A549 (cell line): ENCODE measurements at regions of chr1 and their contacts with region 1.

Region 1: DNA sequence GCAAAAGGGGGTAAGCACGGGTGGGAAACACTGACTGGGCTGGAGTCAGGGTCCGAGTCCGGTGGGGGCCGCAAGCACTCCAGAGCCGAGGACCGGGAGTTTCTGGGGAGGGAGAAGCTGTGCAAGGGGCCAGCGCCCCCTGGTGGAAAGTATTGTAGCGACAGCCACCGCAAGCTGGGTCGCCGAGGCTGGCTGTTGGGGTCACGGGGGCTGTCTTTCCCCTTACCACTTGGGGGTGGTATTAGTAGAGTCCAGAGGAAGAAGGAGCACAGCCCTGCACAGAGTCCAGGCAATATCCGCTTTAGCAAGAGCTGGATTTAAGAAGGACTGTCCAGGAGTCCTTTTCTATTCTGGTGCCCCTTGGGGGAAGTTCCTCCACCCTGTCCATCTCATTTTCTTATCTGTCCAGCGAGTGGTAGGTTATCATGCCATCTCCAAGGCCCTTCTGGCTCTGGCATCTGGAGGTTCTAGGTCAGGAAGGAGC is 17.9 kb upstream of the ETV3 start:
- DNase-seq: peak; percentile 62 to 66
- ATAC-seq: peak; percentile 69 to 89
- H3K4me3 ChIP-seq: peak overlapping the region; percentile 37
- H3K27ac ChIP-seq: peak overlapping the region; percentile 59 to 82; a peak in 4 of 6 replicates
- H3K4me1 ChIP-seq: peaks cover 23% of the 10 kb centered on the region
- CTCF ChIP-seq: peak; percentile 97
- EP300 ChIP-seq: no peak
- POLR2A ChIP-seq: no peak
- RAD21 ChIP-seq: peak; percentile 90 to 92

Region 2: GRCh38 chr1:157081707-157082106 is 74.4 kb before region 1 on chr1:
- CTCF ChIA-PET with region 1: interaction called, 437 read pairs
- POLR2A ChIA-PET with region 1: no interaction called
- DNase-seq: no peak
- ATAC-seq: no peak
- H3K4me3 ChIP-seq: no peak overlapping the region
- H3K27ac ChIP-seq: no peak overlapping the region
- H3K4me1 ChIP-seq: no peaks in the 10 kb centered on the region
- CTCF ChIP-seq: no peak
- EP300 ChIP-seq: no peak
- POLR2A ChIP-seq: no peak
- RAD21 ChIP-seq: no peak

Region 3: DNA sequence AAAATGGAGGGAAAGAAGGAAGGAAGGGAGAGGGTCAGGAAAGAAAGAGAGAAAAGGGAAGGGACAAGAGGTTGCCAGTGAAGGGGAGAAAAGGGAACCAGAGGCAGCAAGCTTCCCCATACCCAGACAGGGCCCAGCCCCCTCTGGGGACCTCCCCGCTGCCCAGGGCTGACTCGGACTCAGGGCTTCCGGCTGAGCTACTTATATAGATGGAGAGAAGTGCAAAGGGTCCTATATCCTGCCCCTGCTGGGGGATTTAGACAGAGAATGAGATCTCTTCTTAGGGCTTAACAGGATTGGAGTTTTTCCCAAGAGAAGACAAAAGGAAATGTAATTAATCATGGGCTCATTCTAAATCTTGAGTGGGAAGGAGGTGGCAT is 56.5 kb before region 1 on chr1 and contains the start of gene ETV3L:
- CTCF ChIA-PET with region 1: interaction called, 40 read pairs
- POLR2A ChIA-PET with region 1: no interaction called
- DNase-seq: no peak
- ATAC-seq: no peak
- H3K4me3 ChIP-seq: no peak within 1 kb of the TSS
- H3K27ac ChIP-seq: no peak within 1 kb of the TSS
- H3K4me1 ChIP-seq: peaks cover 3% of the 10 kb centered on the region; the same call in 1 of the 3 replicates
- CTCF ChIP-seq: no peak
- EP300 ChIP-seq: no peak
- POLR2A ChIP-seq: no peak
- RAD21 ChIP-seq: no peak
- polyA plus RNA-seq, gene ETV3L: not detected in 2 replicates

Region 4: DNA sequence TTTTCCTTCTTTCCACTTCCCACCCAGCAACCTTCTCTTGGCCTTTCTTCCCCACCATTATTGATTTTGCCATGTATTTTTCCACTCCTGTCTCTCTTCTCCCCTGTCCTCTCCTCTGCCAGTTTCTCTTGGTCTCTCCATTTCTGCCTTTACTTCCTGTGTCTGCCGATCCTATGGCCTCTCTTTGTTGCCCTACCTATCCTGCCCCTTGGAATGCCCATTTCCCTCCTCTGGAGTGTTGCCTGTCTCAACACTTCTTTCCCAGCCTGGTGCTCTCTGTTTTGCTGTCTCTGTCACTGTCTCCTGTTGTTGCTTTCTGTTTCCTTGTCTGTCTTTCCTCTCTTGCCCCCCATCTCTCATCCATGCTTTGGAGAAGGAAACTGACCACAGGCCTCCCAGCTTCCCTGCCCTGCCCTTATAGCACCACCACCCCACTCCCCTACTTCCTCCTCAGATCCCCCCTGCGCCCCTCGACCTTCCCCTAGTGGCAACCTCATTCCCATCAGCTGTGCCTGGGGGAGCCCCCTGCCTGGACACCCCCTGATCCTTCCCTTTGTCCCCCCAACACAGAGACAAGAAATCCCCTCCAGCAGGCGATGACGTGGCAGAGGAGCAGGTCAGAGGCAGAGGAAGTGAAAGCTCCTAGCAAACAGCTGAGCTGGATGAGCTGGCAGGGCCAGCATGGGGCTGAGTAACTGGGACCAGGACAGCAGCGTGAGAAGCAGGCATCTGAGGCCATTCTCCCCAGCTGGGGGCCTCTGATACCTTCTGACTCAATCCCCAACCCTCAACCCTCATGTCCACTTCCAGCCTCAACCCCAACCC is 49.9 kb before region 1 on chr1:
- CTCF ChIA-PET with region 1: interaction called, 22 read pairs
- POLR2A ChIA-PET with region 1: no interaction called
- DNase-seq: peak; percentile 40 to 67
- ATAC-seq: peak; percentile 71 to 79
- H3K4me3 ChIP-seq: no peak overlapping the region
- H3K27ac ChIP-seq: peak overlapping the region; percentile 24 to 73; a peak in 4 of 6 replicates
- H3K4me1 ChIP-seq: peaks cover 19% of the 10 kb centered on the region
- CTCF ChIP-seq: no peak
- EP300 ChIP-seq: no peak
- POLR2A ChIP-seq: no peak
- RAD21 ChIP-seq: no peak

Region 5: GRCh38 chr1:157117527-157118057 is 38.5 kb before region 1 on chr1:
- CTCF ChIA-PET with region 1: interaction called, 11 read pairs
- POLR2A ChIA-PET with region 1: no interaction called
- DNase-seq: no peak
- ATAC-seq: no peak
- H3K4me3 ChIP-seq: no peak overlapping the region
- H3K27ac ChIP-seq: no peak overlapping the region
- H3K4me1 ChIP-seq: no peaks in the 10 kb centered on the region
- CTCF ChIP-seq: no peak
- EP300 ChIP-seq: no peak
- POLR2A ChIP-seq: no peak
- RAD21 ChIP-seq: no peak

Region 6: GRCh38 chr1:157138220-157139051 is 17.7 kb before region 1 on chr1 and contains the start of gene ETV3:
- CTCF ChIA-PET with region 1: interaction called, 51 read pairs
- POLR2A ChIA-PET with region 1: interaction called, 7 read pairs
- DNase-seq: peak; percentile 90 to 92
- ATAC-seq: peak; percentile 96 to 98
- H3K4me3 ChIP-seq: peak within 1 kb of the TSS; percentile 96
- H3K27ac ChIP-seq: peak within 1 kb of the TSS; percentile 91 to 98
- H3K4me1 ChIP-seq: peaks cover 14% of the 10 kb centered on the region
- CTCF ChIP-seq: no peak
- EP300 ChIP-seq: no peak
- POLR2A ChIP-seq: peak; percentile 68
- RAD21 ChIP-seq: no peak
- polyA plus RNA-seq, gene ETV3: 12.3 and 14.5 TPM in 2 replicates

Region 7: GRCh38 chr1:157176591-157177121 is 20.6 kb after region 1 on chr1:
- CTCF ChIA-PET with region 1: interaction called, 10 read pairs
- POLR2A ChIA-PET with region 1: no interaction called
- DNase-seq: no peak
- ATAC-seq: no peak
- H3K4me3 ChIP-seq: no peak overlapping the region
- H3K27ac ChIP-seq: no peak overlapping the region
- H3K4me1 ChIP-seq: no peaks in the 10 kb centered on the region
- CTCF ChIP-seq: no peak
- EP300 ChIP-seq: no peak
- POLR2A ChIP-seq: no peak
- RAD21 ChIP-seq: no peak

Region 8: DNA sequence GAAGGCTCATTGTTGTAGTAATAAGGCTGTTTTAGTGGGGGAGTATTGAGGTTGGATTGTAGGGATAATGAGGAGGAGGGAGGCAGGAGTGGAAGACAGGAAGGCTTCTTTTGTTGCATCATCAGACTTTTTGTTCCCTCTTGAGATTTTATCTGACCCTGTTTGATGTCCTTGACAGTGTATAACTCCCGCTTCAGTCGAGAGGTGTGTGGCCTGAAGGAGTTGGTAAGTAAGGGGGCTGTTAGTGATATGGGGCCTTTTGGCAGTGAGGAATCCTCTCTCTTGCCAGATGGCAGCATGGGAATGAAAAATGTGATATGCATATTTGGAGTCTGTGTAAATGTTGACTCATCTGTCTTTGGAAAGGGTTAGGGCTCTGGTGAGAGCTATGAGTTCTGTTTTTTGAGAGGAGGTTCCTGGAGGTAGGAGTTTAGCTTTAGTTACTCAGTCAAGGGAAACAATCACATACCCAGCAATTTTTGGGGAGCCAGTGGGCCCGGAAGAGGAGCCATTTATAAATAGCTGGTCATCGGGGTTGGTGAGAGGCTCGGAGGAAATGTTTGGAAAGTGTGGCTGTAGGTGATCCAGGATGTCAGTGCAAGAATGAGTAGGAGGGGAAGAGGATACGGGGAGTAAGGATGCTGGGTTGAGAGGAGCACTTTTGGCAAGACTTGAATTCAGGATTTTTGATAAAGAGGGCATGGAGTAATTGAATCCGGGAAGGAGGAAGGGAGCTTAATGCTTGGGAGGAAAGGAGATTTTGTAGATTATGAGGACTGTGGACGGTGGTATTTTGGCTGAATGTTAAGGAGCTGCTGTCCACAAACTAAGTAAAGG is 118.8 kb after region 1 on chr1:
- CTCF ChIA-PET with region 1: no interaction called
- POLR2A ChIA-PET with region 1: no interaction called
- DNase-seq: peak in 1 of 2 experiments; percentile 15
- ATAC-seq: peak in 1 of 2 experiments; percentile 49; a peak in 2 of 6 replicates
- H3K4me3 ChIP-seq: no peak overlapping the region
- H3K27ac ChIP-seq: no peak overlapping the region
- H3K4me1 ChIP-seq: 0 out of 3 replicates have a peak, but pooled peaks cover 4% of the 10 kb centered on the region
- CTCF ChIP-seq: no peak
- EP300 ChIP-seq: no peak
- POLR2A ChIP-seq: no peak
- RAD21 ChIP-seq: no peak